Heart right ventricle (tissue), 16 donors: ENCODE measurements at regions of chr5 and their contacts with region 1.

Region 1: DNA sequence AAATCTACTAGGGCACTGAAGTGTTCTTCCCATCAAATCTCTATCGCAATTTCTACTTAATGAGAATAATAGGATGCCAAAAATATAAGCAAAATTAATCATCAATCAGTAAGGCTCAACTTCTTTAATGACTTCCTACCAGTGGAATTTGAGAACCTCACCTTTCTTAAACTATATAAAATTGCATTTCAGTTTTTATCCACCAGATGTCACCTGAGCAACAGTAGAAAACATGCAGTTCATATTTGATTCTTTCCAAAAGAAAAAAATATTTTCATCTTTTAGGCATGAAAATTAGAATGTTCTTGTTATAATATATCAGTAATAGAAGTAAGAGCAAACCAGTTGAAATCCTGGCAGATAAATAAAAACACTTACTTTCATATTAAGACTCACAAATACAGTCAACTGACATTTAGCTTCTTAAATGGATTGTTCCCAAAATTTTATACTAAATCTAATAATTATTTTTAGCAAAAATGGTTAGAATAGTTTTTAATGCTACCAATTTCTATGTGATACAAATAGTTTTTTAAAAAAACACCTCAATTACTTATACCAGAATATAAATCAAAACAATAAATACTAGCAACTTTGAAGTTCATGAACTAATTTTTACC is 13.4 kb upstream of the CCDC112 start:
- DNase-seq: no peak
- ATAC-seq: peak in 2 of 8 donors; percentile 51 to 55
- H3K4me3 ChIP-seq: no peak overlapping the region
- H3K27ac ChIP-seq: no peak overlapping the region
- H3K4me1 ChIP-seq: no peaks in the 10 kb centered on the region
- H3K27me3 ChIP-seq: peaks cover 0 to 12% (median 0%) of the 10 kb centered on the region in 7 donors
- CTCF ChIP-seq: peak; percentile 55 to 87 (median 77)

Region 2: DNA sequence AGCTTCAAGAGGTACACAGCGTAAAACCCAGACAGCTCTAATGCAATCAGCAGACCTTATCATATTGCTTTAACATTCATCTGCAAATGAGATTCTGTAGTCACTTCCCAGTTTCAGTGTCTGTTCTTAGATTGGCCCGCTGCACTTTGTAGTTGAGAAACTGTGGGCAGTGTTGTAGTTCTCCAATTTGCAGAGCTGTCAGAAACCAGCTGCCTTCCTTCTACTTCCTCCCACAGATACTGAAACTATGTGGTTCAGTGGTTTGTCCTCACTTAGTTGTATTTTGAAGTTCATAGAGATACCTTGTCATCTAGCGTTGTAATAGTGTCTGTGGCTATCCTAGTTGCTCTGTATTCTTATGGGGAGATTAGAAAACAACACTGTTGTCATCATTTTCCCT is 100.6 kb before region 1 on chr5:
- intact Hi-C with region 1: no loop called
- DNase-seq: peak in 1 of 2 donors; percentile 9
- ATAC-seq: peak in 7 of 8 donors; percentile 34 to 78 (median 65)
- H3K4me3 ChIP-seq: no peak overlapping the region
- H3K27ac ChIP-seq: peak overlapping the region in 1 of 10 donors; percentile 33
- H3K4me1 ChIP-seq: peaks cover 0 to 18% (median 0%) of the 10 kb centered on the region in 9 donors
- H3K27me3 ChIP-seq: no peaks in the 10 kb centered on the region
- CTCF ChIP-seq: no peak

Region 3: GRCh38 chr5:115267617-115268016 is 42.2 kb before region 1 on chr5:
- intact Hi-C with region 1: no loop called
- DNase-seq: no peak
- ATAC-seq: no peak
- H3K4me3 ChIP-seq: no peak overlapping the region
- H3K27ac ChIP-seq: no peak overlapping the region
- H3K4me1 ChIP-seq: peaks cover 0 to 8% (median 0%) of the 10 kb centered on the region in 9 donors
- H3K27me3 ChIP-seq: no peaks in the 10 kb centered on the region
- CTCF ChIP-seq: no peak

Region 4: DNA sequence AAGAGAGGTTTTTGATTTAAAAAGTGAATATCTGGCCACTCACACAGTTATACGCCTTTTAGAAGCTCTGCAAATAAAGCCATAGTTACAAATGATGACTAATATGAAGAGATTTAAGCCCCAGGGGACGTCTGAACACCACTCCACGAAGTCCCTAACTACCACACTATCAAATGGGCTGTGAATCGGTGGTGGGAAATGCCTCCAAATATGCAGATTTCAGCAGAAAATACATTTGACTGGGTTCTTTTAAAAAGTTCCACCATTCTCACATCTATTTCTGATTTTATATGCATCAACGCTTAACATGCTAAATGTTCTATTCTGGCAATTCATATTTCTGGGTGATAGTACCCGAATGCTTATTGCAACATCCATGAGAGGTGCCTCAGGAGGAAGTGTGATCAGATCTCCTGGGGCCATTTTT is 269.9 kb after region 1 on chr5:
- intact Hi-C with region 1: loop called in 7 of 10 experiments (anchors 1 to 5 kb)
- DNase-seq: no peak
- ATAC-seq: no peak
- H3K4me3 ChIP-seq: no peak overlapping the region
- H3K27ac ChIP-seq: no peak overlapping the region
- H3K4me1 ChIP-seq: peaks cover 0 to 20% (median 0%) of the 10 kb centered on the region in 9 donors
- H3K27me3 ChIP-seq: no peaks in the 10 kb centered on the region
- CTCF ChIP-seq: no peak

Region 5: GRCh38 chr5:115825948-115826347 is 516.1 kb after region 1 on chr5:
- intact Hi-C with region 1: loop called in 4 of 10 experiments (anchors 10 kb)
- DNase-seq: no peak
- ATAC-seq: no peak
- H3K4me3 ChIP-seq: no peak overlapping the region
- H3K27ac ChIP-seq: no peak overlapping the region
- H3K4me1 ChIP-seq: no peaks in the 10 kb centered on the region
- H3K27me3 ChIP-seq: no peaks in the 10 kb centered on the region
- CTCF ChIP-seq: no peak

Region 6: GRCh38 chr5:115841382-115842088 is 531.7 kb after region 1 on chr5 and contains the starts of genes AP3S1 and ATG12:
- intact Hi-C with region 1: loop called in 5 of 10 experiments (anchors 5 to 10 kb)
- DNase-seq: peak; percentile 92
- ATAC-seq: peak; percentile 96 to 98 (median 96)
- H3K4me3 ChIP-seq: peak within 1 kb of the TSS; percentile 59 to 96 (median 90)
- H3K27ac ChIP-seq: peak within 1 kb of the TSS; percentile 83 to 98 (median 95)
- H3K4me1 ChIP-seq: peaks cover 4 to 70% (median 56%) of the 10 kb centered on the region in 9 donors
- H3K27me3 ChIP-seq: no peaks in the 10 kb centered on the region
- CTCF ChIP-seq: no peak
- total RNA-seq, gene AP3S1: 31.9 to 63.0 (median 42.2) TPM
- total RNA-seq, gene ATG12: 18.0 to 29.8 (median 24.3) TPM